ENCODE measurements at regions of chr6 and their contacts with region 1.

Region 1: GRCh38 chr6:44327096-44327495 is 13.9 kb upstream of the AARS2 start:
- DNase-seq: no peak
- H3K27ac ChIP-seq: no peak overlapping the region
- CTCF ChIP-seq: no peak

Region 2: DNA sequence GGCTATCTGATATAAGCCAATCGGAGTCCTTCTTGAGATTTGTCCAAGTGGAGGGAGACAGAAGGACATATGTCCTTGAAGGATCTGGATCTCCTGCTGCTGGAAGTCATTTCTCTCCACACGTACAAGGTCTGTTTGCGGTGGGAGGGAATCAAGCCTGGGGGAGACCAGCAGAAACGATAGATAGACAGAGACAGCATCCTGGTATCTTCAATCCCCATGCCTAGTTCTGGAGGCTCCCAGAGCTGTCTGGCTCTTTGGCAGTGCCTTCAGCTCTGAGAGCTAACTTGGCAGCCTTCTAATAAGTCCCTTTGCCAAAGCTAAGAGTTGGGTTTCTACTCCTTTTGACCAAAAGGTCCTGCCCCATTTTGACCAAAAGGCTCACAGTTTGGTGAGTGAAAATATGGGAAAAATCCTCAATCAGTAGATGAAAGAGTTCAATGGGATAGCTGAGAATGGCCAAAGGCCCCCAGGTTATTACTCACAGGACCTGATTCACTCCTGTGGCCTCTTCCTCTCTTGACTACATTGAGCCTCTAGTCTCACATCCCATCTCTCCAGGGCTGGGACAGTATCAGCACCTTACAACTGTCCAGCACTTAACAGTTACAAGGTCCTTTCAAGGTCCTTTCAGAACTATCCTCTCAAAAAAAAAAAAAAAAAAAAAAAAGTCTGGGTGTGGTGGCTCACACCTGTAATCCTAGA is 34.3 kb before region 1 on chr6:
- CTCF ChIA-PET with region 1: interaction called, 3 read pairs
- POLR2A ChIA-PET with region 1: interaction called, 10 read pairs
- DNase-seq: no peak
- H3K27ac ChIP-seq: no peak overlapping the region
- CTCF ChIP-seq: no peak